PC-9 (cell line): ENCODE measurements at regions of chr14 and their contacts with region 1.

Region 1: DNA sequence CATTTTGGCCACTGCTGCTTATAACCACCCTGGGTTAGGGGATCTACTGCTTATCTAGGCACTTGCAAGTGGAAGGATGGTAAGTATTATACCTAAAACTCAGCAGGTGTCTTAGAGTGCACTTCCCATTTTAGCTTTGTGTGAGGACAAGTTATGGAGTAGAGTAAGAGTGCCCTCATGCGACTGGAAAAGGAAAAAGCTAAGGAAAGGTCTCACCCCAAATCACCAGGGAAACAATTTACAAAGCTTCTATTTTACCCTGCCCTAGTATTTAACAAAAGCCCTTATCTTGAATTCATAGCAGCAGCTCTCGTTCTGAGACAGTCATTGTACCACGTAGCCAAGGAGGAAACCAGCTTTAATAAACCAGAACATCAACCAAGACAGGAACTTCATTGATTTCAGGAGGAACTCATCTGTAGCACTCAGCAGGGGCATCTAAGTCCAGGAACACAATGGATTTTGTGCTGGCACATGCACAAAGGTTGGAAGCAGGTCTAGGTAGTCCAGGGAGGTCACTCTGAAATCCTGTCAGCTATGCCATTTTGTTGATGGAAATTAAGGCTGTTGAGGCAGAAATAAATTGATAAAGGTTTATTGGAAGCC is 2.9 kb downstream of the RDH12 start:
- DNase-seq: peak; percentile 51 to 66
- H3K4me3 ChIP-seq: no peak overlapping the region
- H3K27ac ChIP-seq: no peak overlapping the region
- H3K4me1 ChIP-seq: peaks cover 24% of the 10 kb centered on the region
- H3K27me3 ChIP-seq: no peaks in the 10 kb centered on the region
- CTCF ChIP-seq: peak; percentile 82

Region 2: GRCh38 chr14:66403183-66403582 is 1301.4 kb before region 1 on chr14:
- CTCF ChIA-PET with region 1: no interaction called
- POLR2A ChIA-PET with region 1: no interaction called
- intact Hi-C with region 1: loop called (anchors 5 kb)
- DNase-seq: peak in 1 of 2 experiments; percentile 62
- H3K4me3 ChIP-seq: no peak overlapping the region
- H3K27ac ChIP-seq: no peak overlapping the region
- H3K4me1 ChIP-seq: no peaks in the 10 kb centered on the region
- H3K27me3 ChIP-seq: no peaks in the 10 kb centered on the region
- CTCF ChIP-seq: peak; percentile 65

Region 3: GRCh38 chr14:67426983-67427606 is 277.5 kb before region 1 on chr14:
- CTCF ChIA-PET with region 1: interaction called, 19 read pairs
- POLR2A ChIA-PET with region 1: no interaction called
- intact Hi-C with region 1: loop called (anchors 1 kb)
- DNase-seq: peak; percentile 74 to 76
- H3K4me3 ChIP-seq: no peak overlapping the region
- H3K27ac ChIP-seq: no peak overlapping the region
- H3K4me1 ChIP-seq: peaks cover 29% of the 10 kb centered on the region
- H3K27me3 ChIP-seq: no peaks in the 10 kb centered on the region
- CTCF ChIP-seq: peak; percentile 93

Region 4: GRCh38 chr14:67583711-67584644 is 120.6 kb before region 1 on chr14:
- CTCF ChIA-PET with region 1: interaction called, 21 read pairs
- POLR2A ChIA-PET with region 1: no interaction called
- intact Hi-C with region 1: loop called (anchors 1 kb)
- DNase-seq: peak; percentile 42 to 60
- H3K4me3 ChIP-seq: no peak overlapping the region
- H3K27ac ChIP-seq: no peak overlapping the region
- H3K4me1 ChIP-seq: no peaks in the 10 kb centered on the region
- H3K27me3 ChIP-seq: no peaks in the 10 kb centered on the region
- CTCF ChIP-seq: peak; percentile 85

Region 5: GRCh38 chr14:67619446-67620216 is 85.0 kb before region 1 on chr14 and contains the start of gene ARG2:
- CTCF ChIA-PET with region 1: interaction called, 12 read pairs
- POLR2A ChIA-PET with region 1: no interaction called
- intact Hi-C with region 1: no loop called
- DNase-seq: peak; percentile 98 to 99
- H3K4me3 ChIP-seq: peak within 1 kb of the TSS; percentile 73
- H3K27ac ChIP-seq: peak within 1 kb of the TSS; percentile 36
- H3K4me1 ChIP-seq: peaks cover 27% of the 10 kb centered on the region
- H3K27me3 ChIP-seq: no peaks in the 10 kb centered on the region
- CTCF ChIP-seq: no peak
- total RNA-seq, gene ARG2: 8.6 and 10.2 TPM in 2 replicates